ENCODE measurements at regions of chr6 and their contacts with region 1.

Region 1: DNA sequence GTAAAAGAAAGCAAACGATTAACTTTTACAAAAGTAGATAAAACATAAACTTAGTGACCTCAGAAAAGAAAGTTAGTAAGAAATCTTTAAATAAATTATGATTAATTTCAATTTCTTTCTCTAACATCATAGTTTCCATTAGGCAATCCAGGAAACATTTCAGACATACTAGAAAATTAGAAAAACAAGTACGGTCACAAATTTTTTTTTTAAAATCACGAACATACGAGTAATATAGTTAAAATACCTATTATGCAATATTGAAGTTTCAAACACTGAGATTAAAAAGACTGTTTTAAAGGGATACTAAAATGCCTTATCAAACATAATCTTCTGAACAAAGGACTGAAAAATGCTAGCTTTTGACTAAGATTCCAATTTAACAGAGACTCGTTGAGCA is 26.2 kb downstream of the NOL7 start:
- DNase-seq: no peak
- ATAC-seq: no peak
- H3K4me3 ChIP-seq: no peak overlapping the region
- H3K27ac ChIP-seq: no peak overlapping the region
- H3K4me1 ChIP-seq: peaks cover 0 to 9% (median 0%) of the 10 kb centered on the region in 12 donors
- H3K27me3 ChIP-seq: no peaks in the 10 kb centered on the region
- CTCF ChIP-seq: no peak
- POLR2A ChIP-seq: no peak

Region 2: GRCh38 chr6:13696226-13696625 is 54.9 kb after region 1 on chr6:
- intact Hi-C with region 1: loop called in 2 of 10 experiments (anchors 10 kb)
- DNase-seq: no peak
- ATAC-seq: no peak
- H3K4me3 ChIP-seq: no peak overlapping the region
- H3K27ac ChIP-seq: peak overlapping the region in 1 of 12 donors; percentile 34
- H3K4me1 ChIP-seq: peaks cover 0 to 66% (median 29%) of the 10 kb centered on the region in 12 donors
- H3K27me3 ChIP-seq: no peaks in the 10 kb centered on the region
- CTCF ChIP-seq: no peak
- POLR2A ChIP-seq: no peak